Endothelial cell of umbilical vein (primary cell): ENCODE measurements at regions of chr2 and their contacts with region 1.

Region 1: GRCh38 chr2:118882709-118883210 is 35.3 kb upstream of the EN1 start:
- DNase-seq: peak; percentile 35
- H3K4me3 ChIP-seq: no peak overlapping the region
- H3K27ac ChIP-seq: no peak overlapping the region
- H3K4me1 ChIP-seq: no peaks in the 10 kb centered on the region
- H3K27me3 ChIP-seq: no peaks in the 10 kb centered on the region
- CTCF ChIP-seq: peak; percentile 70 to 91
- POLR2A ChIP-seq: no peak

Region 2: DNA sequence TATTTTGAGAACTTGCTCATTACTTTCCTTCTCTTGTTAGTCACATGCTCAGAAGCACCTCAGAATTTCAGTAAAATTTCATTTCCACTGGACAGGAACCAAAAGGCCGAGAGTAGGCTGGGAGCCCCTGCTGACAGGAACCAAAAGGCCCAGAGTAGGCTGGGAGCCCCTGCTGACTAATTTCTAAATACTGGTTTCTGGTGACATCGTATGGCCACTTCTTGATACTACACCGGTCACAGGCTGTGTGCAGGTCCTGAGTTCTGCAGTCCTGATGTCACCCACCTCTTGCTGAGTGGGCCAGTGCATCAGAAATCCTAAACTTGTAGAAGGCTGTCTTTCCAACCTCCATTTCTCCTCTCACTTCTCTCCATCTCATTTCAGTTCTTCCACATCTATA is 17.7 kb before region 1 on chr2:
- CTCF ChIA-PET with region 1: interaction called, 10 read pairs
- POLR2A ChIA-PET with region 1: no interaction called
- dilution Hi-C with region 1: no loop called
- intact Hi-C with region 1: no loop called
- DNase-seq: peak; percentile 55
- H3K4me3 ChIP-seq: no peak overlapping the region
- H3K27ac ChIP-seq: no peak overlapping the region
- H3K4me1 ChIP-seq: no peaks in the 10 kb centered on the region
- H3K27me3 ChIP-seq: peaks cover 12 to 17% of the 10 kb centered on the region in 2 experiments
- CTCF ChIP-seq: peak; percentile 36 to 52
- POLR2A ChIP-seq: no peak

Region 3: DNA sequence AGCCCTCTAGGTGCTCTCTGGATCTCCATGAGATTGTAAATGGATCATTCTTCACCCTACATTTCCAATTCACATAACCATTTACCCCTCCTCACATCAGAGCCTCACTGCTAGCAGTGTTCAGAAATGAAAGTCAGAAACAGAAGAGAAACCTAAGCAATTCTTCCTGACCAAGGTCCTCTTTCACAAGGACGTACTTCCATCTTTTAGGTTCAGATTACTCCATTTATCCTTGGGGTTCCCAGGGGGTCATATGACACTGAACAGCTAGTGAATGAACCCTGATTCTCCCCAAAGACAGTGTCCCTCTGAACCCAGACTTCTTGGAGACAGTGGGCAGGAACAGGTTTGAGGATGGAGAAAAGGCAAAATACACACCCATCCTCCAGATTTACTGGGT is 46.3 kb after region 1 on chr2:
- CTCF ChIA-PET with region 1: no interaction called
- POLR2A ChIA-PET with region 1: no interaction called
- dilution Hi-C with region 1: no loop called
- intact Hi-C with region 1: no loop called
- DNase-seq: no peak
- H3K4me3 ChIP-seq: no peak overlapping the region
- H3K27ac ChIP-seq: no peak overlapping the region
- H3K4me1 ChIP-seq: no peaks in the 10 kb centered on the region
- H3K27me3 ChIP-seq: no peaks in the 10 kb centered on the region
- CTCF ChIP-seq: no peak
- POLR2A ChIP-seq: no peak

Region 4: GRCh38 chr2:119085613-119086012 is 202.9 kb after region 1 on chr2:
- CTCF ChIA-PET with region 1: no interaction called
- POLR2A ChIA-PET with region 1: no interaction called
- dilution Hi-C with region 1: no loop called
- intact Hi-C with region 1: no loop called
- DNase-seq: no peak
- H3K4me3 ChIP-seq: no peak overlapping the region
- H3K27ac ChIP-seq: no peak overlapping the region
- H3K4me1 ChIP-seq: no peaks in the 10 kb centered on the region
- H3K27me3 ChIP-seq: no peaks in the 10 kb centered on the region
- CTCF ChIP-seq: no peak
- POLR2A ChIP-seq: no peak

Region 5: GRCh38 chr2:119126650-119127049 is 243.9 kb after region 1 on chr2:
- CTCF ChIA-PET with region 1: interaction called, 3 read pairs
- POLR2A ChIA-PET with region 1: no interaction called
- dilution Hi-C with region 1: no loop called
- intact Hi-C with region 1: loop called (anchors 1 kb)
- DNase-seq: no peak
- H3K4me3 ChIP-seq: no peak overlapping the region
- H3K27ac ChIP-seq: no peak overlapping the region
- H3K4me1 ChIP-seq: no peaks in the 10 kb centered on the region
- H3K27me3 ChIP-seq: no peaks in the 10 kb centered on the region
- CTCF ChIP-seq: peak; percentile 38 to 54
- POLR2A ChIP-seq: no peak

Region 6: DNA sequence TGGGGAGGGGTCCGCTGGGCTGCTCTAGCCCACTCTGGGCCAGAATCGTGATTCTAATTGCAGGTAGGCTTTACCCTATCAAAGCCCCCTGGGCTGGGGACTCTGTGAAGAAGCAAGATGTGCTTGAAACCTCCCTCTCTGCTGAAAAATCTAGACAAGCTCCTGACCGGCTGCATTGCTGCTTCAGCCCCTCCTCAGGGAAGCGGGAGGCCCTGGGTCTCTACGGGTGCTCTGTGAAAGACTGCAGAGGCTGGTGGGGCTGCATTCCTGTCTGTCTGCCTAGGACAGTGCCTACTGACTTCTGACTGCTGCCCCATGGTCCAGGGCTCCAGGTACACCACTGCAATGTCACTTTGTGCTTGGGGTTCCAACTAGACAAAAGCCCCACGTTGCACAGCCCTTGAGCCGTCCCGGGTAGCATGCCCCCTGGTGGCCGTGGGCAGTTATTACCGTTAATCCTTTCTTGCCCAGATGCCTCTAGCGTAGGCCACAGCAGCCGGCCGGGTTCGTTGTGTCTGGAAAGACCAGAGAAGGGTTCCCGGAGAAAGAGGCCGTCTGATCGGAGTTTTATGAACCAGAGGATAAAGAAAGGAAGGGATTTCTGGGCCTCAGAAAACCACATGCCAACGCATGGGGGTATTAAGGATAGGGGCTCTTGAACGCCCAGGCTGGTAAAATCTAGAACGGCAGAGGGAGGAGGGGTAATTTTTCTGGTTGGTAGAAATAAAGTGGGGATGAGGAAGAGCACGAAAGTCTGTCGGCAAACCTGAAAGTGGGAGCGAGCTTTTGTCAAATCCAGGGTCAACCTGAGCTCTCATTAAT is 291.7 kb after region 1 on chr2:
- CTCF ChIA-PET with region 1: interaction called, 7 read pairs
- POLR2A ChIA-PET with region 1: no interaction called
- dilution Hi-C with region 1: no loop called
- intact Hi-C with region 1: loop called (anchors 1 kb)
- DNase-seq: peak; percentile 20
- H3K4me3 ChIP-seq: no peak overlapping the region
- H3K27ac ChIP-seq: no peak overlapping the region
- H3K4me1 ChIP-seq: no peaks in the 10 kb centered on the region
- H3K27me3 ChIP-seq: no peaks in the 10 kb centered on the region
- CTCF ChIP-seq: peak; percentile 76 to 84
- POLR2A ChIP-seq: no peak

Region 7: GRCh38 chr2:119264781-119265692 is 382.3 kb after region 1 on chr2:
- CTCF ChIA-PET with region 1: interaction called, 42 read pairs
- POLR2A ChIA-PET with region 1: no interaction called
- dilution Hi-C with region 1: no loop called
- intact Hi-C with region 1: loop called (anchors 2 kb)
- DNase-seq: peak; percentile 49
- H3K4me3 ChIP-seq: no peak overlapping the region
- H3K27ac ChIP-seq: no peak overlapping the region
- H3K4me1 ChIP-seq: no peaks in the 10 kb centered on the region
- H3K27me3 ChIP-seq: no peaks in the 10 kb centered on the region
- CTCF ChIP-seq: peak; percentile 80 to 88
- POLR2A ChIP-seq: no peak

Region 8: GRCh38 chr2:119290859-119291587 is 408.3 kb after region 1 on chr2:
- CTCF ChIA-PET with region 1: interaction called, 86 read pairs
- POLR2A ChIA-PET with region 1: no interaction called
- dilution Hi-C with region 1: no loop called
- intact Hi-C with region 1: loop called (anchors 1 kb)
- DNase-seq: peak; percentile 56
- H3K4me3 ChIP-seq: no peak overlapping the region
- H3K27ac ChIP-seq: no peak overlapping the region
- H3K4me1 ChIP-seq: no peaks in the 10 kb centered on the region
- H3K27me3 ChIP-seq: no peaks in the 10 kb centered on the region
- CTCF ChIP-seq: peak; percentile 57 to 85
- POLR2A ChIP-seq: no peak

Region 9: GRCh38 chr2:119311356-119311755 is 428.6 kb after region 1 on chr2:
- CTCF ChIA-PET with region 1: interaction called, 14 read pairs
- POLR2A ChIA-PET with region 1: no interaction called
- dilution Hi-C with region 1: no loop called
- intact Hi-C with region 1: no loop called
- DNase-seq: no peak
- H3K4me3 ChIP-seq: no peak overlapping the region
- H3K27ac ChIP-seq: no peak overlapping the region
- H3K4me1 ChIP-seq: no peaks in the 10 kb centered on the region
- H3K27me3 ChIP-seq: no peaks in the 10 kb centered on the region
- CTCF ChIP-seq: no peak
- POLR2A ChIP-seq: no peak